GM18951 (cell line): ENCODE measurements at regions of chr15 and their contacts with region 1.

Region 1: GRCh38 chr15:80152180-80152845 is 486 bp upstream of the FAH start:
- POLR2A ChIP-seq: peak; percentile 16

Region 2: GRCh38 chr15:79896637-79897379 is 255.5 kb before region 1 on chr15 and contains the start of gene MTHFS:
- in situ Hi-C with region 1: loop called (anchors 25 kb)
- POLR2A ChIP-seq: peak; percentile 89

Region 3: DNA sequence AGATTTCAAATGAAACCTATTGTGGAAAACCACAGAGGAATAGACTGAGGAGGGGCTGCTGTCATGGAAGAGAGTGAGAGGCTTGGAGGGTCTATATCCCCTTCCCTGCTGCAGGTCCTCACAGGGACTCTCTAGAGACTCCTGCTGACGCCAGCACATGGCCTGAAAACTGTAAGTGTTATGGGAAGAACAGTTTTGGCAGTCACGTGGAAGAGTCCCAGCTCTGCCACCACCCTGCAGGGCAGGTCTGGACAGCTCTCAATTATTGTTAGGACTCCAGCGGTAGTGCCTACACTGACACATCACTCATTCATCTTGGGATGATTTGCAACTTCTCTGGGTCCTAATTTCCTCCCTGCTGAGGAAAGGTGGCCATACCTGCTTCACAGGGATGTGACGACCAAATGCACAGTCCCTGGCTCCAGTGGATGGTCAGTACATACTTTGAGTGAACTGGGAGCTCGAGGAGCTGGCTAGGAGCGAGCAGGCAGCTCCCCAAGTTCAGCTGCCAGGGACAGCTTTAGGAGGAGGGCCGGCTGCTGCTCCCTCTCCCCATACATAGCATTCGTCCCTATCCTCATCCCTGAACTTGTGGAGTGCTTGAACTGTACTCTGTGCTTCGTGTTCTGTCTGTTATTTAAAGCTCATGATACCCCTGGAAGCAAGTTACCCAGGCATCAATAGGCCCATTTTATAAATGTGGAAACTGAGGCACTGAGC is 50.5 kb after region 1 on chr15:
- in situ Hi-C with region 1: no loop called
- POLR2A ChIP-seq: no peak